Breast epithelium (tissue), 4 donors: ENCODE measurements at regions of chr3 and their contacts with region 1.

Region 1: DNA sequence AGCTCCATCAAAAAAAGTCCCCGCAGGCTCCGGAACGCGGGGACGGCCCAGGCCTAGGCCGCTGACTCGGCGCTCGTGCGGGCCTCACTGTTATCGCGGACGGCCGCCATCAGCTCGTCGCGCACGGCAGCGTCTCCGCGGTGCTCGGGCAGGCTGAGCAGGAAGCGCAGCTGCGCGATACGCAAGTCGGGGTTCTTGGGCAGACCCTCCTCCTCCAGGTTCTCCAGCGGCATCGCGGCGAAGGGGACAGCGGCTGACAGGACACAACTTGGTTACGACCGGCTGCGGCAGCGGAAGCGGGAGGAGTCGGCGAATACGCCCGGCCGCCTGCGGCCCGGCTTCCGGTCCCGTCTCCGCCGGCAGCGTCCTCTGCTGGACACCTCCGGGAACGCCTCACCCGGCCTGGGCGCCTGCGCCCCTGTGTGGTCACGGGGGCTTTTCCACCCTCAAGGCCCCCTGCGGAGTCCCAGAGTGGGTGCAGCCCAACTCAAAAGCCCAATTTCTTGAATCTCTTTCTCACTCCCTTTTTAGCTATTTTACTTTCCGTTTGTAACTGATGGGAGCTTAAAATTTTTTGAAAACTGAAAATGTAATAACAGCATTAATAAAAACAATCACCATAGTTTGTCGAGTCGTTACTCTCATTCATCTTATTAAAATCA is at the start of gene PSMD6:
- DNase-seq: peak; percentile 73 to 86
- H3K4me3 ChIP-seq: peak within 1 kb of the TSS; percentile 91 to 96 (median 96)
- H3K27ac ChIP-seq: peak within 1 kb of the TSS; percentile 86 to 89
- H3K4me1 ChIP-seq: peaks cover 0 to 14% of the 10 kb centered on the region in 2 donors
- H3K27me3 ChIP-seq: no peaks in the 10 kb centered on the region
- CTCF ChIP-seq: peak; percentile 98 to 99 (median 99)
- POLR2A ChIP-seq: no peak
- total RNA-seq, gene PSMD6: 60.9 to 74.7 (median 69.8) TPM

Region 2: DNA sequence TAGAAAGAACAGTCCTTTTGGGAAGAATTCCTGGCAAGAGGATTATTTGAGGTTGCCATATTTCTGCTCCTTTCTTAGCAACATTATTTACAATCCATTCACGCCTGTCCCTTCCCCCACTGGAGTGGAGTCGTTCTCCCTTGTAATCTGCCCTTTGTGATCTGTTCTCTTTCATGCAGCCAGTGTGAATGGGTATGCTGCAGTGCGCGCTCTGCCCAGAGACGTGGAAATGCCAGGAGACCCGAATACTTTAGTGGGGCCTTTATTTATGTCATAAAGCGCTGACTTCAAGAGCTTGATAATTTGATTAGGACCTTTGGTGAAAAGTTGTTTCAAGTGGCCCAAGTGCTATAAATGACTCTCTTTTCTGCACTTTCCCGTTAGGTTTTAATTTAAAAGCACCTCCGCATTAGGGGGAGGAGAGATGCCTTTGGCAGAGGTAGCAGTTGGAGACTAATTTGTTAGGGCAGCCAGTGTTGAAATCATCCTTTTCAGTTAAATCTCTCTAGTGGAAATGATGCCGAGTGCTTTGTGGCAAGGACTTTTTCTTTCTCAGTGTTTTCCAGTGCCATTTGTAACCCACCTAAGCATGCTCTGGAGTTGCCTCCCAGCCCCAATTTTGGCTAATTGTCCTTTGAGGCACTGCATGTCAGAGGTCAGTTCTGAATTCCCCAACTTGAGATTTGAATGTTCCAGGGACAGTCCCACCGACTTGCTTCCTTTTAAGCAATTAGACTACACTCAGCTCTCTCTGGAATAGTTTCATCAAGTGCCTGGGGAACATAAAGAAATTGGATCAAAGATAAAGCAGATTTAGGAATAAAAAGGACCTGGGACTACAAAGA is 52.5 kb before region 1 on chr3:
- intact Hi-C with region 1: loop called (anchors 5 kb)
- DNase-seq: no peak
- H3K4me3 ChIP-seq: peak overlapping the region in 2 of 3 donors; percentile 13 to 29
- H3K27ac ChIP-seq: peak overlapping the region; percentile 69 to 75
- H3K4me1 ChIP-seq: peaks cover 0 to 23% of the 10 kb centered on the region in 2 donors
- H3K27me3 ChIP-seq: no peaks in the 10 kb centered on the region
- CTCF ChIP-seq: no peak
- POLR2A ChIP-seq: no peak

Region 3: GRCh38 chr3:64267721-64268604 is 244.6 kb after region 1 on chr3:
- intact Hi-C with region 1: no loop called
- DNase-seq: peak in 1 of 2 donors; percentile 63
- H3K4me3 ChIP-seq: peak overlapping the region; percentile 74 to 91 (median 75)
- H3K27ac ChIP-seq: peak overlapping the region; percentile 91 to 97
- H3K4me1 ChIP-seq: peaks cover 5 to 10% of the 10 kb centered on the region in 2 donors
- H3K27me3 ChIP-seq: no peaks in the 10 kb centered on the region
- CTCF ChIP-seq: no peak
- POLR2A ChIP-seq: peak; percentile 54